ENCODE measurements at regions of chr13 and their contacts with region 1.

Region 1: DNA sequence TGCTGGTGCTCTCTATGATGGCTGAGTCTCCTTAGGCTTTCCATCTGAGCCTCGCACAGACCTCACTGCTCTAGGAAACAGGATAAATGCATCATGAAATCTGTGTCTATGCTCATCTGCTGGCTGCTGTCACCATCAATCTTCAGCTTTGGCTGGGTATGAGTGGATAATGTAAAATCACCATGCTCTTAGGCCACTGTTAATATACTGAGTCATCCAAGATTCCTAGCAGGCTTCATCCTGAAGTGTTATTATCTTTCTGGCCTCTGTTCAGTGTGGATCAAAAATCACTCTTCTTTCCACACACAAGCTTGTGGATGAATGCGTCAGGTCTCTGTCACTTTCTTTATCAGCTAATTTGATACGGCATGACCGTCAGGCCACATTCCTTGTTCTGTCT is 317.4 kb downstream of the NALCN start:
- DNase-seq: no peak
- H3K4me3 ChIP-seq: no peak overlapping the region
- H3K27ac ChIP-seq: no peak overlapping the region
- H3K4me1 ChIP-seq: no peaks in the 10 kb centered on the region
- H3K27me3 ChIP-seq: no peaks in the 10 kb centered on the region
- CTCF ChIP-seq: no peak

Region 2: GRCh38 chr13:100573121-100573520 is 525.8 kb before region 1 on chr13:
- CTCF ChIA-PET with region 1: interaction called, 3 read pairs
- dilution Hi-C with region 1: no loop called
- in situ Hi-C with region 1: loop called (anchors 25 kb)
- intact Hi-C with region 1: loop called (anchors 2 kb)
- DNase-seq: peak; percentile 51
- H3K4me3 ChIP-seq: no peak overlapping the region
- H3K27ac ChIP-seq: no peak overlapping the region
- H3K4me1 ChIP-seq: no peaks in the 10 kb centered on the region
- H3K27me3 ChIP-seq: peaks cover 2% of the 10 kb centered on the region
- CTCF ChIP-seq: peak; percentile 76 to 85

Region 3: DNA sequence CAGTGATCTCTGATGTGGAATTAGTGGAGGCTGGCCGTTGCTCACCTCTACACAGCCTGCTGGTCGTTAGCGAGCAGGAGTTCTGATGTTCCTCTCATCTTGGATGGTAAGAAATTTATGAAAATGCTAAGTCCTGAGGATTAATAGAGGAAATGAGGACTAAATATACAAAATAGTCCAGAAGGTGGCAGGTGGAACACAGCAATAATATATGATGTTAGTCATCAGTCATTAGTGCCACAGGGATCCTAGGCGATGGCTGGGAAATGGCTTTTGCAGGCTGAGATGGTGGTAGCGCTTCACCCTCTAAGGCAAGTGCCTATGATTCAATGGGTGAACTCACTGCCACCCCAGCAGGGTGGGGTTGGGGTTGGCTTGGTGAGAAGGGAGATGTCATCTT is 85.6 kb before region 1 on chr13:
- CTCF ChIA-PET with region 1: interaction called, 3 read pairs
- dilution Hi-C with region 1: no loop called
- in situ Hi-C with region 1: loop called in 1 of 2 experiments (anchors 25 kb)
- intact Hi-C with region 1: loop called (anchors 1 kb)
- DNase-seq: peak; percentile 1
- H3K4me3 ChIP-seq: no peak overlapping the region
- H3K27ac ChIP-seq: no peak overlapping the region
- H3K4me1 ChIP-seq: no peaks in the 10 kb centered on the region
- H3K27me3 ChIP-seq: no peaks in the 10 kb centered on the region
- CTCF ChIP-seq: peak in 1 of 2 donors; percentile 16

Measured in mammary epithelial cell (primary cell).